Right ventricle myocardium inferior (tissue), 1 donor: ENCODE measurements at regions of chr3 and their contacts with region 1.

Region 1: GRCh38 chr3:78844307-78844706 is 923.5 kb downstream of the ROBO1 start:
- DNase-seq: no peak
- ATAC-seq: no peak

Region 2: DNA sequence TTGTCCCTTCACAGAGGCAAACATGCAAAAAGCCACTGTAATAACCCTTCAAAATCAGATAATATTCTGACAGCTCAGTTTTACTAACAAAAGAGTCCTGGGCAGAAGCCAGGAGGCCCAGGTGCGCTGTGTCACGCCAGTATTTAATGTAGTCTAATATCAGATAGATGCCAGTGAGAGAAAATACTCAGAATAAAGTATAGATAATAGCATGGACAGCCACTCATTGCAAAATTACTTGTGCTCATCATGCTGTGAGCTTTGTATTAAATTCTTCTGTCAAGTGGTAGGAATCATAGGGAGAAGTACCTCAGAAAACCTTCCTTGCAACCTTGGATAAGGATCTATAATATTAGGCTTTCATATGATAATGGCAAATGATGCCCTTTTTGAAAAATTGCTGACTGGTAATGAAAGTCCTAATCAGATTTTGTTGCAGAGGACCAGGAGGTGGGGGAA is 230.9 kb before region 1 on chr3:
- intact Hi-C with region 1: no loop called
- DNase-seq: no peak
- ATAC-seq: no peak

Region 3: GRCh38 chr3:78809966-78810365 is 34.3 kb before region 1 on chr3:
- intact Hi-C with region 1: loop called (anchors 2 kb)
- DNase-seq: no peak
- ATAC-seq: no peak